ENCODE measurements at regions of chr3 and their contacts with region 1.

Region 1: GRCh38 chr3:132709761-132710160 is 12.4 kb downstream of the NPHP3 start:
- DNase-seq: no peak
- ATAC-seq: no peak
- H3K4me3 ChIP-seq: no peak overlapping the region
- H3K27ac ChIP-seq: no peak overlapping the region
- H3K4me1 ChIP-seq: no peaks in the 10 kb centered on the region
- H3K27me3 ChIP-seq: no peaks in the 10 kb centered on the region
- CTCF ChIP-seq: no peak

Region 2: GRCh38 chr3:132587401-132587800 is 122.4 kb before region 1 on chr3:
- intact Hi-C with region 1: no loop called
- DNase-seq: no peak
- ATAC-seq: no peak
- H3K4me3 ChIP-seq: no peak overlapping the region
- H3K27ac ChIP-seq: no peak overlapping the region
- H3K4me1 ChIP-seq: no peaks in the 10 kb centered on the region
- H3K27me3 ChIP-seq: no peaks in the 10 kb centered on the region
- CTCF ChIP-seq: no peak

Region 3: DNA sequence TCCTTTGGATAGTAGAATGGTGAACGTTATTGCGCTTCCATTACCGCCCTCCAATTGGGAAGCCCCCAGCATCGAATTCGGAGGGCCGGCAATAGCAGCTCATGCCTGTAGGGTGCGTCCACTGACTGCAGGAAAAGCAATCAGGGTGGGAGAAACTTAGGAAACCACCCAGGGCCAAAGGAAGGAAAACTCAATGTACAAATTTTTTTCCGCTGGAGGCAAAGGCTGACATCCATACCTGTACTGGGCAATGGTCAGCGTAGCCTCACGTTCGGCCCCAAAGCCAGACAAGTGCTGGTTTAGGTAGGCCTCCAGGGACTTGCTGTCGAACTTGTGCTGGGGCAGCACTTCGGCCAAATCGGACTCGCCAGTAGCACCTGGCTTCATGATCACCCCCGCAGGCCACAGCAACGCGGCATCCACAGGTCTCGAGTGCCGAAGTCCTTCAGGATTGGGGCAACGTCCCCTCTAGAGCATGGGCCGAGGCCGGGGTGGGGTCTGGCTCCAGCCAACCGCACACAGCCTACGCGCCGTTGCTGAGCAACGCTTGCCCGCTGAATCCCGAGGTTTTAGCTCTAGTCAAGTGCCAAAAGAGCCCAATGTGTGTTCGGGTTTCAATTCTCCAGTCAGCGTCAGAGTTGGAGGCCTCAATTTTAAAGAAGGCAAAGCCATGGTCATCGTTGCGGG is 50.3 kb before region 1 on chr3 and contains the start of gene ACAD11:
- intact Hi-C with region 1: loop called in 1 of 2 experiments (anchors 10 kb)
- DNase-seq: peak; percentile 75 to 83
- ATAC-seq: peak; percentile 78 to 86 (median 84)
- H3K4me3 ChIP-seq: peak within 1 kb of the TSS; percentile 95
- H3K27ac ChIP-seq: peak within 1 kb of the TSS; percentile 85
- H3K4me1 ChIP-seq: peaks cover 21% of the 10 kb centered on the region
- H3K27me3 ChIP-seq: no peaks in the 10 kb centered on the region
- CTCF ChIP-seq: peak; percentile 59
- total RNA-seq, gene ACAD11: 3.8 to 7.5 (median 6.6) TPM

Region 4: GRCh38 chr3:133649486-133650068 is 939.8 kb after region 1 on chr3:
- intact Hi-C with region 1: loop called in 1 of 2 experiments (anchors 10 kb)
- DNase-seq: no peak
- ATAC-seq: no peak
- H3K4me3 ChIP-seq: no peak overlapping the region
- H3K27ac ChIP-seq: no peak overlapping the region
- H3K4me1 ChIP-seq: no peaks in the 10 kb centered on the region
- H3K27me3 ChIP-seq: no peaks in the 10 kb centered on the region
- CTCF ChIP-seq: no peak